GM10248 (cell line): ENCODE measurements at regions of chr1 and their contacts with region 1.

Region 1: GRCh38 chr1:113904674-113905434 is at the starts of genes AP4B1 and DCLRE1B:
- DNase-seq: peak; percentile 97
- CTCF ChIP-seq: peak; percentile 89

Region 2: DNA sequence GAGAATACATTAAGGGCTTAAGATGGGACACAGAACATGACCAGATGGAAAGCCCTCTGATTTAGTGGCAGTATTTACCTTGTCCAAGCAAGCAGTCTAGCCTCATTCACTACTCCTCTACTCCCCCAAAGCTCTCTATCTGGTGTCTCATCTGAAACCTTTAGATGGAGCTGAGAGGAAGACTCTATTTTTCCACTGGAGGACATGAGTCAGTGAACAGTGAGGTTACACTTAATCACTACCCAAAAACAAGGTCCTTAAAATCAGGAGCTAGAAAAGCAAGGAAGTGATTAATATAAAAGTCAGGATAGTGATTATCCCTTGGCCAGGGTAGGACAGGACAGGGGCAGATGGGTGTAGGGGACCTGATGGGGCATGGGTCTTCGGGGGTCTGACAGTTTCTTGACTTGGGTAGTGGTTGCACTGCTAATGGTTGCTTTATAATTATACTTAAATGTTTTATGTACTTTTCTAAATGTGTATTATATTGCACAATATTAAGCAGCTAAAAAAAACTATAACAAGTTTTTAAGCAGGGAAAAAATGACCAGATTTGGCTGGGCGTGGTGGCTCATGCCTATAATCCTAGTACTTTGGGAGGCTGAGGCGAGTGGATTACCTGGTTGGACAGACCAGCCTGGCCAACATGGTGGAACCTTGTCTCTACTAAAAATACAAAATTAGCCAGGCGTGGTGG is 36.3 kb before region 1 on chr1:
- CTCF ChIA-PET with region 1: interaction called, 11 read pairs
- POLR2A ChIA-PET with region 1: interaction called, 6 read pairs
- DNase-seq: no peak
- CTCF ChIP-seq: no peak

Region 3: GRCh38 chr1:113881661-113882060 is 23.2 kb before region 1 on chr1:
- CTCF ChIA-PET with region 1: interaction called, 10 read pairs
- POLR2A ChIA-PET with region 1: interaction called, 5 read pairs
- DNase-seq: no peak
- CTCF ChIP-seq: no peak